ENCODE measurements at regions of chr20 and their contacts with region 1.

Region 1: GRCh38 chr20:53915446-53916172 is 154.8 kb downstream of the BCAS1 start:
- DNase-seq: no peak
- H3K4me3 ChIP-seq: peak overlapping the region; percentile 55
- CTCF ChIP-seq: peak; percentile 82

Region 2: GRCh38 chr20:53578492-53579222 is 337.0 kb before region 1 on chr20:
- CTCF ChIA-PET with region 1: interaction called, 65 read pairs
- POLR2A ChIA-PET with region 1: no interaction called
- DNase-seq: peak; percentile 52
- H3K4me3 ChIP-seq: no peak overlapping the region
- CTCF ChIP-seq: peak; percentile 54

Region 3: DNA sequence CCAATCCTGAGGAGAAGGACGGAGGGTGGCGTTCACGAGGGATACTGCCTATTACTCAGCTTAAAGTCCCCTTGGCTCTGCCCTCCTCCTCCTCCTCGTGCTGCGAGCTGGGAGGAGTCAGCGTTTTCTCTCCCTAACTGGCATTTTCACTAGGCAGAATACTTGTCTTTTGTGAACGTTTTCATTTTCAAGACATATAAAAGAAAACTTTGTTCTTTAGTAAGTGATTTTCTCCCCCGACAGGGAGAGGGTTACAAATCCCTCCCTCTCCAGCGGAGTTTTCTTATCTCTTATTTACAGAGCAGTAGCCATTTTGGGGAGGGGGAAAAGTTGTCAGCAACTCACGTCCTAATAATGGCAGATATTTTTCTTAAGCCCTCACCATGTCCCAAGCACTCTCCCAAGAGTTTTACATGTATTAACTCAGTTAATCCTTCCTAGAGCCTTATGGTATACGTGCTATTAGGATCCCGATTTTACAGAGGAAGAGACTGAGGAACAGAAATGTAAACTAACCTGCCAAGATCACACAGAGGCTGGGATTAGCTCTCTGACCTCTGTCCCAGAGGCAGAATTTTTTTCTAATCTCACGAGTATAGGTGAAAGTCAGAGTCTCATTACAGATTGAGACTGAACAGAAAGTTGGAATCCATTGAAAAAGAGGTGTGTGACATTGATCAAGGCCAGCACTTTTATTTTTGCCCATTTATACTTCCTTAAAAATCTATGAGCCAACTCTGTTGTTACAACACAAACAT is 292.0 kb before region 1 on chr20:
- CTCF ChIA-PET with region 1: interaction called, 17 read pairs
- POLR2A ChIA-PET with region 1: no interaction called
- DNase-seq: no peak
- H3K4me3 ChIP-seq: peak overlapping the region; percentile 37
- CTCF ChIP-seq: peak; percentile 13

Region 4: DNA sequence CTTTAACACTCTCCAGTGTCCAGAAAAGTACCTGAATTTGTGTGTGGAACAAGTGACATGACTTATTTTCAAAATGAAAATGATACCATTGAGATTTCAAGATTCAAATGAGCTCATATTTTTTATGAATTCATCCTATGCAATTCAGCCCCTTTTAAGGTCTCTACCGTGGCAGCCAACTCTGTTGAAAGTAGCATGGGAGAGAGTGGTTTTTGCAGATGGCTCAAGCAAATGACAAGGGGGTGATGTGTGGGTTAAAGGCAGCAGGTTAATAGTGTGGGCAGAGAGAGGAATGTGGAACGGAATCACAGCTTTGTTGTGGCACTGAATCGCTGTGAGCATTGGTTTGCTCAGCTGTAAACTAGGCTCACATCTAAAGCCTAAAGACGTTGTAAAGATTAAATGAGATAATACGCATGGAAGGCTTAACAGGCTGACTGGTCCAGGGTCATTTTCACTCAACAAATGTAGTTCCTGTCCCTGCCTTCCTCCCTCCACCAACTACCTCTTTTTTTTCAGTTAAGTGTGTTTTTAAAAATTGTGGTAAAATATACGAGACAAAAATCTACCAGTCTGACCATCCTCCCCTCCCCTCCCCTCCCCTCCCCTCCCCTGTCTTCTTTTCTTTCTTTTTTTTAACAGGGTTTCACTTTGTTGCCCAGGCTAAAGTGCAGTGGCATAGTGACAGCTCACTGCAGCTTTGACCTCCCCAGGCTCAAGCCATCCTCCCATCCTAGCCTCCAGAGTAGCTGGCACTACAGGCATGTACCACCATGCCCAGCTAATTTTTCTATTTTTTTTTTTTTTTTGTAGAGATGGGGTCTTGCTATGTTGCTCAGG is 207.3 kb before region 1 on chr20:
- CTCF ChIA-PET with region 1: interaction called, 23 read pairs
- POLR2A ChIA-PET with region 1: no interaction called
- DNase-seq: no peak
- H3K4me3 ChIP-seq: no peak overlapping the region
- CTCF ChIP-seq: no peak

Region 5: GRCh38 chr20:53750827-53751619 is 164.6 kb before region 1 on chr20:
- CTCF ChIA-PET with region 1: interaction called, 20 read pairs
- POLR2A ChIA-PET with region 1: no interaction called
- DNase-seq: peak; percentile 71
- H3K4me3 ChIP-seq: no peak overlapping the region
- CTCF ChIP-seq: no peak

Region 6: GRCh38 chr20:53899351-53900167 is 16.1 kb before region 1 on chr20:
- CTCF ChIA-PET with region 1: interaction called, 62 read pairs
- POLR2A ChIA-PET with region 1: interaction called, 6 read pairs
- DNase-seq: no peak
- H3K4me3 ChIP-seq: no peak overlapping the region
- CTCF ChIP-seq: no peak

Region 7: GRCh38 chr20:53939572-53940359 is 24.2 kb after region 1 on chr20:
- CTCF ChIA-PET with region 1: interaction called, 170 read pairs
- POLR2A ChIA-PET with region 1: no interaction called
- DNase-seq: peak; percentile 72
- H3K4me3 ChIP-seq: no peak overlapping the region
- CTCF ChIP-seq: peak; percentile 78

Region 8: DNA sequence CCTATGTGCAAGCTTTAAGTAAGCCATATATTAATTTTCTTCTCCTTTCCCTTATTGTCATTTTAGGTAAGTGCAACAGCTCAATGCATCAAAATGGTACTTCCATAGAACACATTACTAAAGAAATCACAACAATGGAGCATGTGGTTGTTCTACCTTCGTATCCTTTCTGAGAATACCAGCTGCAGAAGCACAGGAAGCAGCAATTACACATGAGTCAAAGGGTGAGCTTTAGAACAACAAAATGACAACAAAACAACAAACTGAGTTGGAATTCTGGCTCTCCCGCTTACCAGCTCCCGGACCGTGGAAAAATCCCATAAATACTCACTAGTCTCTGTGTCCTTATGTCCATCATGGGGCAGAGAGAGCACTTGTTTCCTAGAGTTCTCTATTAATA is 45.9 kb after region 1 on chr20:
- CTCF ChIA-PET with region 1: no interaction called
- POLR2A ChIA-PET with region 1: no interaction called
- DNase-seq: no peak
- H3K4me3 ChIP-seq: no peak overlapping the region
- CTCF ChIP-seq: no peak